CD8-positive, alpha-beta T cell (primary cell): ENCODE measurements at regions of chr16 and their contacts with region 1.

Region 1: GRCh38 chr16:66830422-66831404 is at the start of gene NAE1:
- DNase-seq: peak; percentile 78 to 95 (median 88)
- ATAC-seq: peak; percentile 97
- H3K4me3 ChIP-seq: peak within 1 kb of the TSS; percentile 66 to 82
- H3K4me3 Mint-ChIP-seq: peak within 1 kb of the TSS; percentile 77
- H3K27ac ChIP-seq: peak within 1 kb of the TSS in 1 of 2 experiments; percentile 72
- H3K27ac Mint-ChIP-seq: peak within 1 kb of the TSS; percentile 45
- H3K4me1 ChIP-seq: peaks cover 18% of the 10 kb centered on the region
- H3K4me1 Mint-ChIP-seq: peaks cover 34% of the 10 kb centered on the region
- H3K27me3 ChIP-seq: no peaks in the 10 kb centered on the region
- H3K27me3 Mint-ChIP-seq: peaks cover 2% of the 10 kb centered on the region
- CTCF ChIP-seq: peak; percentile 98
- total RNA-seq, gene NAE1: 91.9 to 95.9 TPM

Region 2: DNA sequence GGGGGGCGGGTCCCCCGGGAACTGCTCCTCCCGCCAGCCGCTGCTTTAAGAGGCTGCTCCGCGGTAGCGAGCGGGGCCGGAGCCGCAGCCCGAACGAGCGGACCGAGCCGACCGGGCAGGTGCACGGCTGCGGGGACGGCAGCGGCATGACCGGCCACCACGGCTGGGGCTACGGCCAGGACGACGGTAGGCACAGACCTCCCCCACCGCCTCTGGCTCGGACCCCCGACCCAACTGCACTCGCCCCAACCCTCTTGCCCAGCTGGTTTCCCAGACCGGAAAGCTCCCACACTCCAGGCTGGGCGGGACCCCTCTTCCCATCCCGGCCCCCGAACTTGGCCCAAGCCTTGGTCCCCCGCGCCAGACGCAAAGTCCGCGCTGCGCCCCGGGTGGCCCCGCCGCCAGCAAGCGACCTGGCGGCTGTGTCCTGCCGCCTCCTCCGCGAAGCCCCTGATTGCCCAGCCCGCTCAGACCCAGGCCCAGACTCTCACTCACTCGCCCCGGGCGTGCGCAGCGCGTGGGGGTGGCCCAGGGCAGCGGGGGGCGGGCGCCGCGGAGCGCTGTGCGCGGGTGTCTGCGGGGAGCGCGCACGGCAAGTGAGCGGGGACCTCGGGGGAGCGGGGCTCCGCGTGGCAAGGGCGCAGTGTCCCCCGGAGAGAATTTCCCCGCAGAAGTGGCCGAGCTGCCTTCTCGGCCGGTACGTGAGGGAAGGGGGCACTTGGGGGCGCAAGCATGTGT is 13.8 kb after region 1 on chr16 and contains the start of gene CA7:
- CTCF ChIA-PET with region 1: interaction called, 17 read pairs
- POLR2A ChIA-PET with region 1: interaction called, 4 read pairs
- intact Hi-C with region 1: no loop called
- DNase-seq: no peak
- ATAC-seq: peak; percentile 46
- H3K4me3 ChIP-seq: no peak within 1 kb of the TSS
- H3K4me3 Mint-ChIP-seq: peak within 1 kb of the TSS; percentile 68
- H3K27ac ChIP-seq: no peak within 1 kb of the TSS
- H3K27ac Mint-ChIP-seq: no peak within 1 kb of the TSS
- H3K4me1 ChIP-seq: peaks cover 4% of the 10 kb centered on the region
- H3K4me1 Mint-ChIP-seq: peaks cover 13% of the 10 kb centered on the region
- H3K27me3 ChIP-seq: peaks cover 0 to 7% of the 10 kb centered on the region in 2 experiments
- H3K27me3 Mint-ChIP-seq: peaks cover 34% of the 10 kb centered on the region
- CTCF ChIP-seq: no peak
- total RNA-seq, gene CA7: not detected

Region 3: DNA sequence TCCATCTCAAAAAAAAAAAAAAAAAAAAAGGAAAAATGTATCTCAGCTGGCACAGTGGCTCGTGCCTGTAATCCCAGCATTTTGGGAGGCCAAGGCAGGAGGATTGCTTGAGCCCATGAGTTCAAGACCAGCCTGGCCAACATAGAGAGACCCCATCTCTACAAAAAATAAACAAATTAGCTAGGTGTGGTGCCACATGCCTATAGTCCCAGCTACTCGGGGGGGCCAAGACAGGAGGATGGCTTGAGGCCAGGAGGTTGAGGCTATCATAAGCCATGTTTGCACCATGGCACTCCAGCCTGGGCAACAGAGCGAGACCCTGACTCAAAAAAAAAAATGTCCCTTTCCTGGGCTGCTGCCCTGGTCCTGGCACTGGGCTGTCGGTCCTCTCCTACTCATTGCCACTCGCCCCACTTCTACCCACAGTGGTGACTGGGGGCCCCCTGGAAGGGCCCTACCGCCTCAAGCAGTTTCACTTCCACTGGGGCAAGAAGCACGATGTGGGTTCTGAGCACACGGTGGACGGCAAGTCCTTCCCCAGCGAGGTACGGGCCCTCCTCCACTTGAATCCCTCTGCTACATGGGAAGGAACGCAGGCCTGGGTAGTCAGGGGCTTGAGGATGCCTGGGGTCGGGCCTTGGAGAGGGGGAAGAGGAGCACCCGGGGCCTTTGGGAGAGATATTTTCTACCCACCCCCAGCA is 19.6 kb after region 1 on chr16:
- CTCF ChIA-PET with region 1: interaction called, 17 read pairs
- POLR2A ChIA-PET with region 1: interaction called, 3 read pairs
- intact Hi-C with region 1: no loop called
- DNase-seq: no peak
- ATAC-seq: no peak
- H3K4me3 ChIP-seq: no peak overlapping the region
- H3K4me3 Mint-ChIP-seq: no peak overlapping the region
- H3K27ac ChIP-seq: no peak overlapping the region
- H3K27ac Mint-ChIP-seq: no peak overlapping the region
- H3K4me1 ChIP-seq: no peaks in the 10 kb centered on the region
- H3K4me1 Mint-ChIP-seq: peaks cover 5% of the 10 kb centered on the region
- H3K27me3 ChIP-seq: no peaks in the 10 kb centered on the region
- H3K27me3 Mint-ChIP-seq: peaks cover 13% of the 10 kb centered on the region
- CTCF ChIP-seq: no peak

Region 4: DNA sequence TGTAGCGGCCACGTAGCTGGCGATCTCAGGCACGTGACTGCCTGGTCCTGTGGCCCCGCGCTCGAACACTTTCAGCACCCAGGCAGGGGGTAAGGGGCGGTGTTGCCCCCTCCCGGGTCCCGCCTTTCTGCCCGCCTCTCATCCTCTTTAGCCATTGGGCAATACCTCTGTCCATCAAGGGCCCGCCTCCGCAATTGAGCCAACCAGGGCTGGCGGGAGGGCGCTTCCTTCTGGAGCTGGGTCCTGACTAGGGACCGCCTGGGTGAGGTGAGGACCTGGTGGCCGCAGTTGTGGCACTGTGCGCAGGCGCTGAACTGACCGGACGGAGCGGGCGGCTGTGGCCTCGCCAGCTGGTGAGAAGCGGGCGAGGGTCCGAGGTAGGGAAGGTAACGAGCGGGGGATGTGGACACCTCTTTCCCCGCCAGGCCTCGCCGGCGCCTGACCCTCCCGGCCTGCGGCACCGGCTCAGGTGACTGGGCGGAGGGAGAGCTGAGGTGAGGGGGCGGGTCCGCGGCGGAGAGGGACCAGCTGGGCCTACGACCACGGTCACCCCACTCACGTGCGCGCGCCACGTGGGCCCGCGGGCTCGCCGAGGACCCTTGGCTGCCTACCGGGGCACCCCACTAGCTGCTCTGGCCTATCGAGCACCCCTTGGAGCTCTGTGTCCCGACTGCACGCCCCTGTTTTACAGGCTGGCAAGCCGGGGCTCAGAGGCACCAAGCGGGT is 49.7 kb after region 1 on chr16 and contains the start of gene PDP2:
- CTCF ChIA-PET with region 1: interaction called, 5 read pairs
- POLR2A ChIA-PET with region 1: interaction called, 17 read pairs
- intact Hi-C with region 1: no loop called
- DNase-seq: peak; percentile 75 to 95 (median 89)
- ATAC-seq: peak; percentile 97
- H3K4me3 ChIP-seq: peak within 1 kb of the TSS; percentile 81 to 95
- H3K4me3 Mint-ChIP-seq: peak within 1 kb of the TSS; percentile 99
- H3K27ac ChIP-seq: peak within 1 kb of the TSS; percentile 47 to 54
- H3K27ac Mint-ChIP-seq: peak within 1 kb of the TSS; percentile 94
- H3K4me1 ChIP-seq: peaks cover 7% of the 10 kb centered on the region
- H3K4me1 Mint-ChIP-seq: peaks cover 27% of the 10 kb centered on the region
- H3K27me3 ChIP-seq: no peaks in the 10 kb centered on the region
- H3K27me3 Mint-ChIP-seq: no peaks in the 10 kb centered on the region
- CTCF ChIP-seq: no peak
- total RNA-seq, gene PDP2: 5.1 to 6.1 TPM